ENCODE measurements at regions of chr16 and their contacts with region 1.

Region 1: DNA sequence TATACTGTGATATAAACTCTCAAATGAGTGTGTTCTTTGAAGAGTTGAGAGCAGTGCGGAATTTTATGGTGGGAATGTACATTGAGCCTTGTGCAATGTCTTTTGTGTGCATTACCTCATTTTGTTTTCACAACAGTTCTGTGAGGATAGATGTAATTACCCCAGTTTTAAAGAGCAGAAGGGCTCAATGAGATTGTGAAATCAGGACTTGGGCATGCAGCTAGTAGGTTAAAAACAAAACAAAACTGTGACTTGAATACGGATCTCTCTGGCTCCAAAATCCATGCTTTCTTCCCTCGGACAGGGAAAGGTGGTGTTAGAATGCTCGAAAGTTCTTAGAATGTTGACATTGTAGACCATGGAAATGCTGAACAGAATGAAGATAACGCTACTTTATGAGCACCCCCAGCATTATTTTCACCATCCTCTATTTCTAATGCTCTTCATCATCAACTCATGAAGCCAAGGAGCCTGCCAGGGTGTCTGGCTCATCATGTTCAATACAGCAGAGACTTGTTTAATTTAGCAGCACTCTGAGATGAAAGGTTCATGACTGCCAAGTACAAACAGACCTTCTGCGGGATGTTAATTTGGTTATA is 17.1 kb downstream of the MRTFB start:
- DNase-seq: peak in 1 of 5 donors; percentile 41
- ATAC-seq: peak; percentile 72 to 87 (median 81)
- H3K4me3 ChIP-seq: no peak overlapping the region
- H3K27ac ChIP-seq: peak overlapping the region in 2 of 12 donors; percentile 12 to 55
- H3K4me1 ChIP-seq: peaks cover 0 to 59% (median 25%) of the 10 kb centered on the region in 12 donors
- H3K27me3 ChIP-seq: no peaks in the 10 kb centered on the region
- CTCF ChIP-seq: no peak
- POLR2A ChIP-seq: no peak

Region 2: GRCh38 chr16:13982451-13982850 is 105.8 kb before region 1 on chr16:
- intact Hi-C with region 1: no loop called
- DNase-seq: no peak
- ATAC-seq: no peak
- H3K4me3 ChIP-seq: no peak overlapping the region
- H3K27ac ChIP-seq: no peak overlapping the region
- H3K4me1 ChIP-seq: no peaks in the 10 kb centered on the region
- H3K27me3 ChIP-seq: no peaks in the 10 kb centered on the region
- CTCF ChIP-seq: no peak
- POLR2A ChIP-seq: no peak

Region 3: GRCh38 chr16:14077918-14078317 is 10.3 kb before region 1 on chr16:
- intact Hi-C with region 1: loop called in 1 of 10 experiments (anchors 1 kb)
- DNase-seq: no peak
- ATAC-seq: no peak
- H3K4me3 ChIP-seq: no peak overlapping the region
- H3K27ac ChIP-seq: no peak overlapping the region
- H3K4me1 ChIP-seq: peaks cover 0 to 9% (median under 1%) of the 10 kb centered on the region in 12 donors
- H3K27me3 ChIP-seq: no peaks in the 10 kb centered on the region
- CTCF ChIP-seq: no peak
- POLR2A ChIP-seq: no peak

Region 4: GRCh38 chr16:14132696-14133048 is 44.4 kb after region 1 on chr16:
- intact Hi-C with region 1: no loop called
- DNase-seq: no peak
- ATAC-seq: no peak
- H3K4me3 ChIP-seq: no peak overlapping the region
- H3K27ac ChIP-seq: no peak overlapping the region
- H3K4me1 ChIP-seq: peaks cover 0 to 25% (median 7%) of the 10 kb centered on the region in 12 donors
- H3K27me3 ChIP-seq: no peaks in the 10 kb centered on the region
- CTCF ChIP-seq: no peak
- POLR2A ChIP-seq: no peak

Region 5: GRCh38 chr16:14337303-14338191 is 249.3 kb after region 1 on chr16:
- intact Hi-C with region 1: no loop called
- DNase-seq: no peak
- ATAC-seq: peak in 3 of 4 donors; percentile 34 to 63 (median 55)
- H3K4me3 ChIP-seq: no peak overlapping the region
- H3K27ac ChIP-seq: no peak overlapping the region
- H3K4me1 ChIP-seq: no peaks in the 10 kb centered on the region
- H3K27me3 ChIP-seq: no peaks in the 10 kb centered on the region
- CTCF ChIP-seq: no peak
- POLR2A ChIP-seq: no peak

Measured in heart left ventricle (tissue), 16 donors.